ENCODE measurements at regions of chr21 and their contacts with region 1.

Region 1: GRCh38 chr21:29232601-29233546 is 65.8 kb upstream of the BACH1 start:
- DNase-seq: no peak
- ATAC-seq: peak; percentile 42
- H3K4me3 Mint-ChIP-seq: peak overlapping the region; percentile 72
- H3K27ac Mint-ChIP-seq: peak overlapping the region; percentile 96
- H3K4me1 Mint-ChIP-seq: peaks cover 78% of the 10 kb centered on the region
- H3K27me3 Mint-ChIP-seq: no peaks in the 10 kb centered on the region
- CTCF ChIP-seq: no peak

Region 2: GRCh38 chr21:29125191-29125590 is 107.7 kb before region 1 on chr21:
- CTCF ChIA-PET with region 1: no interaction called
- POLR2A ChIA-PET with region 1: no interaction called
- intact Hi-C with region 1: loop called (anchors 1 kb)
- DNase-seq: no peak
- ATAC-seq: peak; percentile 83
- H3K4me3 Mint-ChIP-seq: no peak overlapping the region
- H3K27ac Mint-ChIP-seq: peak overlapping the region; percentile 69
- H3K4me1 Mint-ChIP-seq: peaks cover 42% of the 10 kb centered on the region
- H3K27me3 Mint-ChIP-seq: no peaks in the 10 kb centered on the region
- CTCF ChIP-seq: no peak

Region 3: GRCh38 chr21:29175408-29176134 is 57.3 kb before region 1 on chr21:
- CTCF ChIA-PET with region 1: no interaction called
- POLR2A ChIA-PET with region 1: no interaction called
- intact Hi-C with region 1: loop called (anchors 2 kb)
- DNase-seq: no peak
- ATAC-seq: no peak
- H3K4me3 Mint-ChIP-seq: peak overlapping the region; percentile 52
- H3K27ac Mint-ChIP-seq: peak overlapping the region; percentile 24
- H3K4me1 Mint-ChIP-seq: peaks cover 27% of the 10 kb centered on the region
- H3K27me3 Mint-ChIP-seq: no peaks in the 10 kb centered on the region
- CTCF ChIP-seq: no peak

Region 4: GRCh38 chr21:29217818-29218291 is 15.0 kb before region 1 on chr21:
- CTCF ChIA-PET with region 1: no interaction called
- POLR2A ChIA-PET with region 1: no interaction called
- intact Hi-C with region 1: no loop called
- DNase-seq: no peak
- ATAC-seq: no peak
- H3K4me3 Mint-ChIP-seq: no peak overlapping the region
- H3K27ac Mint-ChIP-seq: no peak overlapping the region
- H3K4me1 Mint-ChIP-seq: no peaks in the 10 kb centered on the region
- H3K27me3 Mint-ChIP-seq: no peaks in the 10 kb centered on the region
- CTCF ChIP-seq: no peak

Region 5: GRCh38 chr21:29265690-29266479 is 33.0 kb after region 1 on chr21:
- CTCF ChIA-PET with region 1: interaction called, 3 read pairs
- POLR2A ChIA-PET with region 1: interaction called, 3 read pairs
- intact Hi-C with region 1: loop called (anchors 1 kb)
- DNase-seq: no peak
- ATAC-seq: peak; percentile 86
- H3K4me3 Mint-ChIP-seq: peak overlapping the region; percentile 17
- H3K27ac Mint-ChIP-seq: peak overlapping the region; percentile 82
- H3K4me1 Mint-ChIP-seq: peaks cover 21% of the 10 kb centered on the region
- H3K27me3 Mint-ChIP-seq: no peaks in the 10 kb centered on the region
- CTCF ChIP-seq: no peak

Region 6: DNA sequence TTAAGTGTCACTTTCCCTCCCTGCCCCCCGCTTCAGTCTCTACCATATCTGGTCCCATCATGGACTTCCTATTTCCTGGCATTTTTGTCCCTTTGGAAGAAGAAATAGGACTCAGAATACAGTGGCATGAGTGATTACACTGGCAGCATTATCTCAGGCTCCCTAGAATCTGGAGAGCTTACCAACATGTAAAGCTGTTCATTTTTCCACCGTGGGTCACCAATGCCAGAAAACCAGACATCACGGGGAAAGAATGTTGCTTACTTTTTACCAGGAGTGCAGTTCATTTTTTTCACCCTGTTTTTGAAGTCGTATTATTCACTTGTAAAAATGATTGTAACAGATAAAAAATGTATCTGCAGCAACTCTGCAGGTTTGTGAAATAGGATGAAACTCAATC is 110.6 kb after region 1 on chr21:
- CTCF ChIA-PET with region 1: interaction called, 6 read pairs
- POLR2A ChIA-PET with region 1: interaction called, 3 read pairs
- intact Hi-C with region 1: loop called (anchors 1 kb)
- DNase-seq: no peak
- ATAC-seq: no peak
- H3K4me3 Mint-ChIP-seq: no peak overlapping the region
- H3K27ac Mint-ChIP-seq: no peak overlapping the region
- H3K4me1 Mint-ChIP-seq: peaks cover 36% of the 10 kb centered on the region
- H3K27me3 Mint-ChIP-seq: no peaks in the 10 kb centered on the region
- CTCF ChIP-seq: no peak

Region 7: DNA sequence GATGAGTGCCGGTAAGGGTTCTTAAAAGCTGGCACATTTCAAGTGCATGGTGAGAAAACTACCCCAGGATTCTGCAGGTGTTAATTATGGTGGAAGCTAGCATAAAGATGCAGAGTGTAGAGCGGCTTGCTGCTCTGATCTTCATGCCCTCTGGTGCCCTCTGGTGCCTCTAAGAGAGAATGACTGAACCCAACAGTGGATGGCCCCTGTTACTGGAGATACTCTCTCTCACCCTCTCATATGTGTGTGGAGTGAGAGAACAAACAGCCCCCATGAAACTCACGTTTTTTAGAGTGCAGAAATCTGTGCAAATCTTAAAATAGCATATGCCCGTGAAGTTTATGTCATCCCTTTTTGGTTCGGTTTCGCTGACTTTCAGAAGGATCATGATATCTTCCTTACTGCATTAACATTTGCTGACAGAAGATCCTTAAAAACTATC is 616.9 kb after region 1 on chr21:
- CTCF ChIA-PET with region 1: no interaction called
- POLR2A ChIA-PET with region 1: no interaction called
- intact Hi-C with region 1: loop called (anchors 1 kb)
- DNase-seq: no peak
- ATAC-seq: peak; percentile 97
- H3K4me3 Mint-ChIP-seq: no peak overlapping the region
- H3K27ac Mint-ChIP-seq: no peak overlapping the region
- H3K4me1 Mint-ChIP-seq: no peaks in the 10 kb centered on the region
- H3K27me3 Mint-ChIP-seq: peaks cover 1% of the 10 kb centered on the region
- CTCF ChIP-seq: no peak

Region 8: GRCh38 chr21:30340441-30341241 is 1107.8 kb after region 1 on chr21:
- CTCF ChIA-PET with region 1: no interaction called
- POLR2A ChIA-PET with region 1: no interaction called
- intact Hi-C with region 1: no loop called
- DNase-seq: no peak
- ATAC-seq: no peak
- H3K4me3 Mint-ChIP-seq: no peak overlapping the region
- H3K27ac Mint-ChIP-seq: no peak overlapping the region
- H3K4me1 Mint-ChIP-seq: no peaks in the 10 kb centered on the region
- H3K27me3 Mint-ChIP-seq: no peaks in the 10 kb centered on the region
- CTCF ChIP-seq: no peak